ENCODE measurements at regions of chr5 and their contacts with region 1.

Region 1: DNA sequence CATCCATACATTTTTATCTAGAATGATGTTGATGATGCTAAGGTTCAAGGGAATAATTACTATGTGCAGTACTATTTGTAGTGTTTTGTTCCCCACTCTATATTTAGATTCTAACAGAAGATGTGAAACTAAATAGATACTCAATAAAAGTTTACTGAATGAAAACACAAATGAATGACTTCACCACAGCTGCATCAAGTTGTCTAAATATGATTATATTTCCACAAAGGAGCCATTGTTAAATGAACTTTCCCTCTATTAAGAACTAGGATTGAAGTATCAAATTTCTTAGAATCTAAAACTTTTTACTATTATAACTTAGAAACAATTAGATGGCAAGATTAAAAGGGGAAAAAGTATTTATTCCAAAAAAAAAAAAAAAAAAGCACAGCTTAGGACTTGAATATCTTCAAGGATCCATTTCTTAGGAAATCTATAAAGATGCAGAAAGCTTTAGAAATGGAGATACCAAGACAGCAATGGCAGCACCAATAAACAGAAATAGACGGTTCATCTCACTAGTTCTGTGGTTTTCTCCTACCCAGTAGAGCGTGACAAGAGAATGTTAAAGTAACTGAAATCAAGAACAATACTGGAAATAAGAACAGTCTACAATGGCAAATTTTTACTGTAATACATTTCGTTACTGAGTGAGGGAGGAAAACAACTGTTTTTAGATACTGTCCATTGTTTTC is 347.6 kb downstream of the EBF1 start:
- DNase-seq: no peak
- H3K4me3 ChIP-seq: no peak overlapping the region
- H3K27me3 ChIP-seq: no peaks in the 10 kb centered on the region
- CTCF ChIP-seq: no peak

Region 2: GRCh38 chr5:158456756-158457155 is 295.4 kb before region 1 on chr5:
- CTCF ChIA-PET with region 1: no interaction called
- POLR2A ChIA-PET with region 1: no interaction called
- DNase-seq: peak; percentile 92
- H3K4me3 ChIP-seq: no peak overlapping the region
- H3K27me3 ChIP-seq: no peaks in the 10 kb centered on the region
- CTCF ChIP-seq: no peak

Region 3: DNA sequence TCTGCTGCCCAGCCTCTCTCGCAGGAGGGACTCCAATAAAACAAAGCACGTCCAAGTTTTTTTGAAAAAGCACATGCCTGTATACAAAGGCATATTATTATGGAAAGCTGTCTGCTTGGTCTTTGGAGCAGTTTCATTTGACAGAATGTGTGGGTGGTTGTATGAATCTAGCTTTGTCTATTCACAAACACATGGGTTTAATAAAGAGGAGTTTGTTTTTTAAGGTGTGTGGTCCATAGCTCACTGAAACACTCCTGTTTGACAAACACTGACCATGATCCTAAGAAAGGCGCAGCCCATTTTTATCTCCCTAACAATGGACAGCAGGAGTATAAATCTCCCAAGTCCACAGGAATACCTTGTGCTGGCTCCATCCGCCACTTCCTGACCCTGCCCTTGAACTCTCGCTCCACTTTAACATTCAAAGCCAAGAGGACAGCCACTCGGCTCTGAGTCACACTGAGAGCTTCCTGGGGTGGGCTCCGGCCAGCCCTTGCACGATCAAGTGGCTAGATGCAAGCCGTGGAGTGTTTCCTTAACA is 24.3 kb before region 1 on chr5:
- CTCF ChIA-PET with region 1: no interaction called
- POLR2A ChIA-PET with region 1: no interaction called
- DNase-seq: no peak
- H3K4me3 ChIP-seq: no peak overlapping the region
- H3K27me3 ChIP-seq: no peaks in the 10 kb centered on the region
- CTCF ChIP-seq: no peak

Region 4: DNA sequence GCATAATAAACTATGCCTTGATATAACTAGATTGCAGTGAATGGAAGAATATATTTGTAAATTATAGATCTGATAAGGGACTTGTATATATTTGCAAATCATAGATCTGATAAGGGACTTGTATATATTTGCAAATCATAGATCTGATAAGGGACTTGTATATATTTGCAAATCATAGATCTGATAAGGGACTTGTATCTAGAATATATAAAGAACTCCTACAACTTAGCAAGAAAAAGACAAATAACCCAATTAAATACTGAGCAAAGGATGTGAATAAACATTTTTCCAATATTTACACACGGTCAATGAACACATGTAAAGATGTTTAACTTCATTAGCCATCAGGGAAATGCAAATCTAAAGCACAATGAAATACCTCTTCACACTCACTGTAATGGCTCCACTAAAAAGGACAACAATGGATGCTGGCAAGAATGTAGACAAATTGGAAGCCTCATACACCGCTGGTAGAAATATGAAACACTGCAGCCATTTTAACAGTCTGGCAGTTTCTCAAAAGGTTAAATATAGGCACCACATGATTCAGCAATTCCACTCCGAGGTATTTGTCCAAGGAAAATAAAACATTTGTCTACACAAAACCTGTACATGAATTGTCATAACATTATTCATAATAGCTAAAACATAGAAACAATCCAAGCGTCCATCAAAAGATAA is 437.1 kb after region 1 on chr5:
- CTCF ChIA-PET with region 1: no interaction called
- POLR2A ChIA-PET with region 1: interaction called, 11 read pairs
- DNase-seq: no peak
- H3K4me3 ChIP-seq: no peak overlapping the region
- H3K27me3 ChIP-seq: no peaks in the 10 kb centered on the region
- CTCF ChIP-seq: no peak